Posterior vena cava (tissue), 2 donors: ENCODE measurements at regions of chr10 and their contacts with region 1.

Region 1: GRCh38 chr10:122021379-122021778 is 32.4 kb downstream of the TACC2 start:
- DNase-seq: no peak

Region 2: DNA sequence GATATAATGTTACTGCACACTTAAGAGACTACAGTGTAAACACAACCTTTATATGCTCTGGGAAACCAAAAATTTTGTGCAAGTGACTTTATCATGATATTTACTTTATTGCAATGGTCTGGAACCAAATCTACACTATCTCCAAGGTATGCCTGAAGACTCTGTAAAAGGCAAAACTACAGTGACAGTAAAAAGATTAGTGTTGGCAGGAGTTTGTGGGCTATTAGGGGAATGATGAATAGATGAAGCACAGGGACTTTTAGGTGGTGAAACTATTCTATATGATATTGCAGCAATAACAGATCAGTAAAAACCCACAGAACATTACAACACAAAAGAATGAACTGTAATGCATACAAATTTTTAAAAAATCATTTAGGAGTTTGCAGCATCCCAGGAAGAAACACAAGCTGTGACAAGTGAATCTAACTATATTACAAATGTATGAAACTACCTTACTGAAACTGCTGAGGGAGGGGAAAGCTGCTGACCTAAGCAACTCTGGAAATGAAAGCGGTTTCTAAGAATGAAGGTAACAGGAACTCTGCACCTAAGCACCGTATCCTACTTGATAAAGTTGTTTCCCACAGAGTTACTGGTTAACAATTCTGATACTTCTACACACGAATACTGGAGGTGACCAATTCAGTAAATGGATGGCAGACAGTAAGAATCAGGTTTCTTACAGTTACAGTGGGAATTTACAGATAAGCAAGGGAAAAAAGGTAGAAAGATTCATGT is 176.2 kb before region 1 on chr10:
- intact Hi-C with region 1: no loop called
- DNase-seq: no peak

Region 3: DNA sequence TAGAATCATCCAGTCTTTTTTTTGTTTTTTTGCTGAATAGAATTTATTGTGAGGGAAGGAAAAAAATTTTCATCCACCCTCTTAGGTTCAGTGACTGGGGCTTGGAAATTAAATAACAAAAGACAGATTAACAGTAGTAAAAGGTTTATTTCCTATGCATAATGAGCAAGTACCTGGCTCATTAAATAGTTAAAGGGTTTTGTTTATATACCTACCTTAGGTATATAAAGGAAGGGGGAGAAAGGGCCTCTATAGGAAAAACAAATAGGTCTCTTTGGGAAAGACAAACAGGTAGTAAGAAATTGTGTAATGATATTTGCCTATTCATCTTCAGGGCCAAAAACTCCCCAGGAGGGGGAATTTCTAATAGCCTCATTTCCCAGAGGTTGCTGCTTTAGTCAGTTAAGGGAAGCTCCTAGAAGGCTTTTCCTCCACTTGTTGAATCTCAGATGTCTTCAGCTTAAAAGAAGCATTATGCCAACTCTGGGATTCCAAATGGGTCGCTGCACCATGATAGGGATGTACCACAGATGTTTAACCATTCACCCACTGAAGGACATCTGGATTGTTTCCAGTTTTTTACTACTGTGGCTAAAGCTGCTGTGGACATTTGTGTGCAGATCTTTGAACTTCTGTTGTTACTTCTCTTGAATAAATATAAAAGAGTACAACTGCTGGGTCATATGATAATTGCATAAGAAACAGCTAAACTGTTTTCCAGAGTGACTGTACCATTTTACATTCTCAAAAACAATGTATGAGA is 998.7 kb after region 1 on chr10:
- intact Hi-C with region 1: loop called in 1 of 2 experiments (anchors 5 kb)
- DNase-seq: no peak